Ascending aorta (tissue), 2 donors: ENCODE measurements at regions of chr3 and their contacts with region 1.

Region 1: GRCh38 chr3:30263925-30264313 is 342.5 kb upstream of the TGFBR2 start:
- DNase-seq: no peak
- H3K4me3 ChIP-seq: no peak overlapping the region
- H3K27ac ChIP-seq: no peak overlapping the region
- H3K4me1 ChIP-seq: peaks cover 6 to 14% of the 10 kb centered on the region in 2 donors
- H3K27me3 ChIP-seq: no peaks in the 10 kb centered on the region
- CTCF ChIP-seq: no peak

Region 2: GRCh38 chr3:30002797-30003196 is 261.1 kb before region 1 on chr3:
- intact Hi-C with region 1: no loop called
- DNase-seq: no peak
- H3K4me3 ChIP-seq: no peak overlapping the region
- H3K27ac ChIP-seq: no peak overlapping the region
- H3K4me1 ChIP-seq: peaks cover 0 to 4% of the 10 kb centered on the region in 2 donors
- H3K27me3 ChIP-seq: no peaks in the 10 kb centered on the region
- CTCF ChIP-seq: no peak

Region 3: GRCh38 chr3:30231277-30232141 is 32.4 kb before region 1 on chr3:
- intact Hi-C with region 1: loop called (anchors 2 kb)
- DNase-seq: no peak
- H3K4me3 ChIP-seq: no peak overlapping the region
- H3K27ac ChIP-seq: no peak overlapping the region
- H3K4me1 ChIP-seq: peaks cover 4 to 18% of the 10 kb centered on the region in 2 donors
- H3K27me3 ChIP-seq: no peaks in the 10 kb centered on the region
- CTCF ChIP-seq: no peak